OCI-LY7 (cell line): ENCODE measurements at regions of chr5 and their contacts with region 1.

Region 1: DNA sequence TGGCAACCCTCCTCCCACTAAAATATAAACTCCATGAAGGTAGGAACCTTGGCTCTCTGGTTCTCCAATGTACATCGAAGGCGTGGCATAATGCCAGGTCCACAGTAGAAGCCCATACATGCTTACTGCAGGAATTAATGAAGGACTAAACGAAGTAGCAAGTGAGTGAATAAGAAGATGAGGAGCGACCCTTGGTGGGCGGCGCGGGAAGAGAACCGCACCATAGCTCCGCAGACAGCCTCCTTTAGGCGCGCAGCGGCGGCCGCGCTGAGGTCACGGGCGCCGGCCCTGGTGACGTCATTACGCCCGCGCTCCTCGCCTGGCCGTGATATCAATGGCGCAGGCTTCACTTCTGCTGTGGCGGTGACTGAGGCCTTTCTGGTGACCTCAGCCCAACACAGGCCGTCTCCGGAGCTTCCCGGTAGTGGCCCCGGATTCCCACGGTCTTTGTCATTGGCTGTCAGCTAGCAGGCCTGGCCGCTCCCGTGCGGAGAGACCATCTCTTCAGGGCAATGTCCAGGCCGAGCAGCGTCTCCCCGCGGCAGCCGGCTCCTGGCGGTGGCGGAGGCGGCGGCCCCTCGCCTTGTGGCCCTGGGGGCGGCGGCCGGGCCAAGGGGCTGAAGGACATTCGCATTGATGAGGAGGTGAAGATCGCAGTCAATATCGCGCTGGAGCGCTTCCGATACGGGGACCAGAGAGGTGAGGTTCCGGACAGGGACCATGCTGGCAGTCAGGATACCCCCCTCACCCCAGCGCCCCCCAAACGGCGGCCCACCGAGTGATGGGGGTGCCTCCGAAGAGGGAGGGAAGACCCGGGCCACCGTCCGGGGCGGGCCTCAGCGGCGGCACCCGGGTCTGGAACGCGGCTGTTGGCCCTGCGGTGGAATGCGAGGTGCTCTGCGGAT is at the start of gene YTHDC2:
- DNase-seq: peak; percentile 88
- H3K4me3 ChIP-seq: peak within 1 kb of the TSS; percentile 79
- H3K27ac ChIP-seq: peak within 1 kb of the TSS; percentile 37
- H3K4me1 ChIP-seq: peaks cover 23% of the 10 kb centered on the region
- CTCF ChIP-seq: peak; percentile 65
- total RNA-seq, gene YTHDC2: 30.6 and 40.3 TPM in 2 replicates

Region 2: GRCh38 chr5:112995764-112996618 is 517.6 kb before region 1 on chr5:
- CTCF ChIA-PET with region 1: interaction called, 3 read pairs
- POLR2A ChIA-PET with region 1: no interaction called
- intact Hi-C with region 1: loop called (anchors 2 kb)
- DNase-seq: peak; percentile 76
- H3K4me3 ChIP-seq: no peak overlapping the region
- H3K27ac ChIP-seq: no peak overlapping the region
- H3K4me1 ChIP-seq: no peaks in the 10 kb centered on the region
- CTCF ChIP-seq: peak; percentile 98

Region 3: GRCh38 chr5:113043491-113043931 is 470.1 kb before region 1 on chr5:
- CTCF ChIA-PET with region 1: no interaction called
- POLR2A ChIA-PET with region 1: no interaction called
- intact Hi-C with region 1: loop called (anchors 5 kb)
- DNase-seq: peak; percentile 37
- H3K4me3 ChIP-seq: no peak overlapping the region
- H3K27ac ChIP-seq: no peak overlapping the region
- H3K4me1 ChIP-seq: peaks cover 18% of the 10 kb centered on the region
- CTCF ChIP-seq: peak; percentile 67

Region 4: GRCh38 chr5:113311301-113311700 is 202.3 kb before region 1 on chr5:
- CTCF ChIA-PET with region 1: no interaction called
- POLR2A ChIA-PET with region 1: no interaction called
- intact Hi-C with region 1: no loop called
- DNase-seq: no peak
- H3K4me3 ChIP-seq: no peak overlapping the region
- H3K27ac ChIP-seq: no peak overlapping the region
- H3K4me1 ChIP-seq: no peaks in the 10 kb centered on the region
- CTCF ChIP-seq: no peak

Region 5: GRCh38 chr5:113330533-113331208 is 183.0 kb before region 1 on chr5:
- CTCF ChIA-PET with region 1: no interaction called
- POLR2A ChIA-PET with region 1: no interaction called
- intact Hi-C with region 1: loop called (anchors 1 kb)
- DNase-seq: peak; percentile 61
- H3K4me3 ChIP-seq: no peak overlapping the region
- H3K27ac ChIP-seq: no peak overlapping the region
- H3K4me1 ChIP-seq: peaks cover 4% of the 10 kb centered on the region
- CTCF ChIP-seq: peak; percentile 85

Region 6: GRCh38 chr5:113336975-113337374 is 176.7 kb before region 1 on chr5:
- CTCF ChIA-PET with region 1: interaction called, 3 read pairs
- POLR2A ChIA-PET with region 1: interaction called, 4 read pairs
- intact Hi-C with region 1: loop called (anchors 1 kb)
- DNase-seq: peak; percentile 23
- H3K4me3 ChIP-seq: no peak overlapping the region
- H3K27ac ChIP-seq: no peak overlapping the region
- H3K4me1 ChIP-seq: no peaks in the 10 kb centered on the region
- CTCF ChIP-seq: peak; percentile 61

Region 7: DNA sequence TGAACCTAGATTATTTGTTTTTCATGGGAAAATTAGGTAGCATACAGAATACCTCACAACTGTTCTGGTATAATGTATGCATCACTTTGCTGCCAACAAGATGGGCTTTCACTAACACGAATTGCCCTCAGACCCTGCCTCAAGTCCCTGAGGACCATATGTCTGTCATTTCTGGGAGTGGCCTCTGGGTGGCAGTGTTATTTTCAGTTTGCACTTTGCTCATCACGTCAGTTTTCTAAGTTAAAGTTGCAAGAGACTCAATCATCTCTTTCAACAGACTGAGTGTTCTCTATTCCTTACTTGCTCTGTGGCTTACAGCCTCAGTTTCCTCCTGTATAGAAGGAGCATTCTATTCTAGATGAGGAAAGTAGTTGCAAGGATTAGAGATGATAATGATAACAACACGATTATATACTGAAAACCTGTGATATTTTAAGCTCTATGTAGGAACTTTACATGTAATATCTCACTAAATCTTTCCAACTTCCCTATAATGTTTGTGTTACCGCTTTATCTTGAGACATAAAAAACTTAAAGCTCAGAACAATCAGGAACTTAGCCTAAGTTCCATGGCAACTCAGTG is 134.6 kb before region 1 on chr5:
- CTCF ChIA-PET with region 1: interaction called, 6 read pairs
- POLR2A ChIA-PET with region 1: interaction called, 7 read pairs
- intact Hi-C with region 1: loop called (anchors 1 kb)
- DNase-seq: peak; percentile 65
- H3K4me3 ChIP-seq: no peak overlapping the region
- H3K27ac ChIP-seq: no peak overlapping the region
- H3K4me1 ChIP-seq: no peaks in the 10 kb centered on the region
- CTCF ChIP-seq: peak; percentile 93